T-cell (primary cell): ENCODE measurements at regions of chr15 and their contacts with region 1.

Region 1: DNA sequence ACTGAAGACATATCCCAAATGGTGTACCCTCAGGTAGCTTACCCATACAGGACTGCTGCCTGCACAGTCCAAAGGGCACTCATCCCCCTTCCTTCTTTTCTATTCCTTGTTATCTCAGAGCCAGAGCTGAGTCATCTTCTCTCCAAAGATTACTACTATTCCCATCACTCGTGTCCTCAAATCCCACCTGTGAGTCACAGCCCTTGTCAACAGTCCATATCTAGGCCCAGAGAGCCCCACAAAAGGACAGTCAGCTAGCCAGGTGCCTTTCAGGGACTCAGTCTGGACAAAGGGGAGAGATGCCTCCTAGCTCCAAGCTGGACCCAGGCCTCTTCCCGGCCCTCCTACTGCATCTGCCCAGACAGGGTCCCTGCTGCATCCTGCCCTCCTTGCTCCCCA is 11.0 kb downstream of the PARP16 start:
- DNase-seq: no peak
- ATAC-seq: peak in 1 of 4 experiments; percentile 10
- H3K4me3 ChIP-seq: no peak overlapping the region
- H3K4me3 Mint-ChIP-seq: peak overlapping the region in 1 of 3 donors; percentile 52
- H3K27ac ChIP-seq: peak overlapping the region; percentile 39
- H3K27ac Mint-ChIP-seq: peak overlapping the region; percentile 62 to 76
- H3K4me1 ChIP-seq: peaks cover 20 to 42% of the 10 kb centered on the region in 2 experiments
- H3K4me1 Mint-ChIP-seq: peaks cover 45 to 57% (median 49%) of the 10 kb centered on the region in 3 donors
- H3K27me3 ChIP-seq: no peaks in the 10 kb centered on the region
- H3K27me3 Mint-ChIP-seq: no peaks in the 10 kb centered on the region

Region 2: GRCh38 chr15:65196637-65197338 is 78.9 kb before region 1 on chr15:
- CTCF ChIA-PET with region 1: interaction called in 1 of 2 experiments, 13 read pairs
- POLR2A ChIA-PET with region 1: no interaction called
- DNase-seq: no peak
- ATAC-seq: no peak
- H3K4me3 ChIP-seq: no peak overlapping the region
- H3K4me3 Mint-ChIP-seq: no peak overlapping the region
- H3K27ac ChIP-seq: no peak overlapping the region
- H3K27ac Mint-ChIP-seq: no peak overlapping the region
- H3K4me1 ChIP-seq: no peaks in the 10 kb centered on the region
- H3K4me1 Mint-ChIP-seq: no peaks in the 10 kb centered on the region
- H3K27me3 ChIP-seq: no peaks in the 10 kb centered on the region
- H3K27me3 Mint-ChIP-seq: no peaks in the 10 kb centered on the region